ENCODE measurements at regions of chr11 and their contacts with region 1.

Region 1: DNA sequence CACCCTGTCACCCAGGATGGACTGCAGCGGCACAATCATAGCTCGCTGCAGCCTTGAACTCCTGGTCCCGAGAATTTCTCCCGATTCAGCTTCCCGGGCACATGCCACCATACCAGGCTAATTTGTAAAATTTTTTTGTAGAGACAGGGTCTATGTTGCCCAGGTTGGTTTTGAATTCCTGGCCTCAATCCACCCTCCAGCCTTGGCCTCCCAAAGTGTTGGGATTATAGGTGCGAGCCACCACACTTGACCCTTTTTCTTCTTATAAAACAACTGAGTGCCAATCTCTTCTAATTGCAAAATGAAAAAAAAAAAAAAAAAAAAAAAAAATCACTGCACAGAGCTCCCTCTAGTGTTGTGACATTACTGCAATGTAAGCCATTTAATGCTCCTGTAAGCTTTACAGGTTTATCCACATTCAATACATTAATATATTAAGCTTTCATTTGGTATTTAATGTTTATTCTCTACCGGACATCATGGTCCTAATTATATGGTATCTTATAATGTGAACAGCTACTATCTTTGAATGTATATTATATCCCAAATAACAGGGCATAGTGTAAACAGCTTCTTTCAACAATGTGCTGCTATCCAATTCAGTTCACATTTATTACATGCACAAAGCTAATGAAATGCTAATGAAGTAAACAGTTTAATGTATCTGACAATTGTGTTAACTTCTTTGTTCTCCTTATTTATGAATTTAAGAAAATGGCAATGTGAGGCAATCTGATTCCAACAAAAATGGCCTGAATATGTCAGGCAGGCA is 44.6 kb downstream of the COPB1 start:
- DNase-seq: no peak
- ATAC-seq: peak; percentile 42
- H3K4me3 Mint-ChIP-seq: no peak overlapping the region
- H3K27ac Mint-ChIP-seq: no peak overlapping the region
- H3K4me1 Mint-ChIP-seq: peaks cover 8% of the 10 kb centered on the region
- H3K27me3 Mint-ChIP-seq: no peaks in the 10 kb centered on the region

Region 2: GRCh38 chr11:14288189-14288935 is 166.7 kb before region 1 on chr11:
- CTCF ChIA-PET with region 1: interaction called, 15 read pairs
- POLR2A ChIA-PET with region 1: no interaction called
- DNase-seq: no peak
- ATAC-seq: peak; percentile 82
- H3K4me3 Mint-ChIP-seq: peak overlapping the region; percentile 44
- H3K27ac Mint-ChIP-seq: peak overlapping the region; percentile 79
- H3K4me1 Mint-ChIP-seq: peaks cover 28% of the 10 kb centered on the region
- H3K27me3 Mint-ChIP-seq: no peaks in the 10 kb centered on the region

Region 3: GRCh38 chr11:14300661-14301304 is 154.3 kb before region 1 on chr11:
- CTCF ChIA-PET with region 1: interaction called, 180 read pairs
- POLR2A ChIA-PET with region 1: interaction called, 9 read pairs
- DNase-seq: peak; percentile 67
- ATAC-seq: peak; percentile 89
- H3K4me3 Mint-ChIP-seq: no peak overlapping the region
- H3K27ac Mint-ChIP-seq: no peak overlapping the region
- H3K4me1 Mint-ChIP-seq: peaks cover 36% of the 10 kb centered on the region
- H3K27me3 Mint-ChIP-seq: no peaks in the 10 kb centered on the region

Region 4: GRCh38 chr11:14308114-14308896 is 146.7 kb before region 1 on chr11:
- CTCF ChIA-PET with region 1: interaction called, 180 read pairs
- POLR2A ChIA-PET with region 1: interaction called, 4 read pairs
- DNase-seq: no peak
- ATAC-seq: peak; percentile 74
- H3K4me3 Mint-ChIP-seq: no peak overlapping the region
- H3K27ac Mint-ChIP-seq: no peak overlapping the region
- H3K4me1 Mint-ChIP-seq: peaks cover 40% of the 10 kb centered on the region
- H3K27me3 Mint-ChIP-seq: no peaks in the 10 kb centered on the region

Region 5: GRCh38 chr11:14413307-14414069 is 41.6 kb before region 1 on chr11:
- CTCF ChIA-PET with region 1: interaction called, 31 read pairs
- POLR2A ChIA-PET with region 1: no interaction called
- DNase-seq: peak; percentile 29
- ATAC-seq: no peak
- H3K4me3 Mint-ChIP-seq: no peak overlapping the region
- H3K27ac Mint-ChIP-seq: peak overlapping the region; percentile 65
- H3K4me1 Mint-ChIP-seq: peaks cover 84% of the 10 kb centered on the region
- H3K27me3 Mint-ChIP-seq: no peaks in the 10 kb centered on the region

Region 6: GRCh38 chr11:14422052-14422813 is 32.8 kb before region 1 on chr11:
- CTCF ChIA-PET with region 1: interaction called, 18 read pairs
- POLR2A ChIA-PET with region 1: no interaction called
- DNase-seq: no peak
- ATAC-seq: no peak
- H3K4me3 Mint-ChIP-seq: no peak overlapping the region
- H3K27ac Mint-ChIP-seq: no peak overlapping the region
- H3K4me1 Mint-ChIP-seq: peaks cover 22% of the 10 kb centered on the region
- H3K27me3 Mint-ChIP-seq: no peaks in the 10 kb centered on the region

Region 7: GRCh38 chr11:14480716-14481115 is 25.7 kb after region 1 on chr11:
- CTCF ChIA-PET with region 1: interaction called, 10 read pairs
- POLR2A ChIA-PET with region 1: no interaction called
- DNase-seq: no peak
- ATAC-seq: no peak
- H3K4me3 Mint-ChIP-seq: no peak overlapping the region
- H3K27ac Mint-ChIP-seq: no peak overlapping the region
- H3K4me1 Mint-ChIP-seq: peaks cover 3% of the 10 kb centered on the region
- H3K27me3 Mint-ChIP-seq: no peaks in the 10 kb centered on the region